Activated naive CD4-positive, alpha-beta T cell treated with anti-CD3 and anti-CD28 coated beads for 36 hours (primary cell): ENCODE measurements at regions of chr3 and their contacts with region 1.

Region 1: GRCh38 chr3:125437631-125438435 is 62.7 kb upstream of the ZNF148 start:
- DNase-seq: peak; percentile 70
- H3K4me3 Mint-ChIP-seq: no peak overlapping the region
- H3K27ac Mint-ChIP-seq: no peak overlapping the region
- H3K4me1 Mint-ChIP-seq: no peaks in the 10 kb centered on the region
- H3K27me3 Mint-ChIP-seq: no peaks in the 10 kb centered on the region

Region 2: DNA sequence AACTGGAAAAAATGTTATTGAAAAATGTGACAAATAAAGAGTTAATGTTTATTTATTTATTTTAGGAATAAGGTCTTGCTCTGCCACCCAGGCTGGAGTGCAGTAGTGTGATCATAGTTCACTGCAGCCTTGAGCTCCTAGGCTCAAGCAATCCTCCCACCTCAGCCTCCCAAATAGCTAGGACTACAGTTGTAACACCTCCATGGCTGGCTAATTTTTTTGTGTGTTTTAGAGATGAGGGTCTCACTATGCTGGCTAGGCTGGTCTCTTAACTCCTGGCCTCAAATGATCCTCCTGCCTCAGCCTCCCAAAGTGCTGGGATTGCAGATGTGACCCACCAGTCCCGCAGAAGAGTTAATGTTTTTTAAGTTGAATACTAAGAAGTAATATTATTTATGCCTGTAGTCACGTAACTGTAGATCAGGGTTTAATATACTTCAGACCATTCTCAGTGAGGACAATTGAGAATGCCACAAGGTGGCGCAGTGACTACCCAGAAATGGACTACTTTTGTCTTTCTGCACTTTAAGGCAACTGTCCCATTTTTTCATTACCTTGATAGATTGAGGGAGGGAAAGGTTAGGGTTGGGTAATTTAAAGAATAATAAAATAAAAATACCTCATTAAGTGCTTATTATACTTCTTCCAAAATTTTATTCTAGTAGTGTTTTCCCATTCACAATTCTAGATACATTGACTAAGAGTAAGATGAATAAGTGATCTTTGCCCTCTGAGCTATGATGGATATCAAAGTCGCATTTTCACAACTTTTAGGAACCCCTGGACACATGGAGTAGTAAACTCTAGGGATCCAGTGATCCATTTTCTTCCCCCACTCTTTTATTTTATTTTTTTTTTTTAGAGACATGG is 509.3 kb before region 1 on chr3:
- CTCF ChIA-PET with region 1: interaction called, 5 read pairs
- intact Hi-C with region 1: loop called (anchors 1 kb)
- DNase-seq: peak; percentile 82
- H3K4me3 Mint-ChIP-seq: no peak overlapping the region
- H3K27ac Mint-ChIP-seq: no peak overlapping the region
- H3K4me1 Mint-ChIP-seq: no peaks in the 10 kb centered on the region
- H3K27me3 Mint-ChIP-seq: peaks cover 3% of the 10 kb centered on the region

Region 3: GRCh38 chr3:124995460-124995994 is 442.3 kb before region 1 on chr3:
- CTCF ChIA-PET with region 1: interaction called, 11 read pairs
- intact Hi-C with region 1: loop called (anchors 1 kb)
- DNase-seq: peak; percentile 72
- H3K4me3 Mint-ChIP-seq: no peak overlapping the region
- H3K27ac Mint-ChIP-seq: peak overlapping the region; percentile 24
- H3K4me1 Mint-ChIP-seq: peaks cover 3% of the 10 kb centered on the region
- H3K27me3 Mint-ChIP-seq: no peaks in the 10 kb centered on the region

Region 4: GRCh38 chr3:125150525-125151441 is 287.1 kb before region 1 on chr3:
- CTCF ChIA-PET with region 1: interaction called, 3 read pairs
- intact Hi-C with region 1: loop called (anchors 1 kb)
- DNase-seq: peak; percentile 80
- H3K4me3 Mint-ChIP-seq: no peak overlapping the region
- H3K27ac Mint-ChIP-seq: no peak overlapping the region
- H3K4me1 Mint-ChIP-seq: peaks cover 13% of the 10 kb centered on the region
- H3K27me3 Mint-ChIP-seq: peaks cover 3% of the 10 kb centered on the region

Region 5: GRCh38 chr3:125212509-125213244 is 225.2 kb before region 1 on chr3 and contains the start of gene SLC12A8:
- CTCF ChIA-PET with region 1: no interaction called
- intact Hi-C with region 1: loop called (anchors 5 kb)
- DNase-seq: no peak
- H3K4me3 Mint-ChIP-seq: peak within 1 kb of the TSS; percentile 38
- H3K27ac Mint-ChIP-seq: no peak within 1 kb of the TSS
- H3K4me1 Mint-ChIP-seq: peaks cover 14% of the 10 kb centered on the region
- H3K27me3 Mint-ChIP-seq: peaks cover 41% of the 10 kb centered on the region
- total RNA-seq, gene SLC12A8: 1.1 TPM

Region 6: DNA sequence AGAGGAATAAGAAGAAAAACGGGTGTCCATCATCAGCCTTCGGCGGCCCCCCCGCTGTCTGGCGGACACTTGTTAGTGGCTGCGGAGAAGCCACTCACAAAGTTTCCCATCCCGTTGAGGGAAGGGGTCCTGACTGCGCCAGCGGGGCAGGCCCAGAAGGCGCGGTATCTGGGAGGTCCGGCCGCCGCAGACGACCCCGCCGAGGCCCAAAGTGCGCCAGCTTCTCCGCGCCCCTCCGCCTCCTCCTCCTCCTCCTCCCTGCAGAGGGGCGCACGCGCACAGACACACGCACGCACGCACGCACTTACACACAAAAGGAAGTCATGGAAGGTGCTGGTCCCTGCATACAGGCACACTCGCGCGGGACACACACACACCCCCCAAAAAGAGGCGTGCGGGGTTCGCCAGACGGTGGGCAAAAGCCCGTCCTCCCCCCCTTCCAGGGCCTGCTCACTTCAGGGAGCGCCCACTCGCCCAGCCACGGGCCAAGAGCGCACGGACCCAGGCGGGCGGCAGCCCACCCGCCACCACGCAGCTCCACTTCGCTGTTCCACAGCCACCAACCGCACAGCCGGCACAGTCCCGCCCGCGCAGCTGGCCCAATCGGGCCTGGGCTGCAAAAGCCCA is 80.7 kb before region 1 on chr3:
- CTCF ChIA-PET with region 1: no interaction called
- intact Hi-C with region 1: no loop called
- DNase-seq: peak; percentile 69
- H3K4me3 Mint-ChIP-seq: peak overlapping the region; percentile 71
- H3K27ac Mint-ChIP-seq: peak overlapping the region; percentile 78
- H3K4me1 Mint-ChIP-seq: peaks cover 54% of the 10 kb centered on the region
- H3K27me3 Mint-ChIP-seq: no peaks in the 10 kb centered on the region

Region 7: DNA sequence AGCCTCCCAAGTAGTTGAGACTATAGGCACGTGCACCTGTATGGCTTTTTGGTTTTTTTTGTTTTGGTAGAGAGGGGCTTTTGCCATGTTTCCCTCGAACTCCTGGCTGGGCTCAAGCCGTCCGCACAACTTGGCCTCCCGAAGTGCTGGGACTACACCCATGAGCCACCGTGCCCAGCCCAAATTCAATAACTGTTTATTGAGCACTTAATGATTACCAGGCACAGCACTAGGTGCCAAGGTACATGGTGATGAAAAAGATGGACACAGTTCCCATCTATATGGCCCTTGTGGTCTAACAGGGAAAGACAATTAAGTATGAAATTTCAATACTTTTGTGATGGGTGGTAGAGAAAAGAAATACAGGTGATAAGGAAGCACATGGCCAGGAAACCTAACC is 26.9 kb before region 1 on chr3:
- CTCF ChIA-PET with region 1: no interaction called
- intact Hi-C with region 1: no loop called
- DNase-seq: no peak
- H3K4me3 Mint-ChIP-seq: no peak overlapping the region
- H3K27ac Mint-ChIP-seq: no peak overlapping the region
- H3K4me1 Mint-ChIP-seq: no peaks in the 10 kb centered on the region
- H3K27me3 Mint-ChIP-seq: peaks cover 6% of the 10 kb centered on the region

Region 8: DNA sequence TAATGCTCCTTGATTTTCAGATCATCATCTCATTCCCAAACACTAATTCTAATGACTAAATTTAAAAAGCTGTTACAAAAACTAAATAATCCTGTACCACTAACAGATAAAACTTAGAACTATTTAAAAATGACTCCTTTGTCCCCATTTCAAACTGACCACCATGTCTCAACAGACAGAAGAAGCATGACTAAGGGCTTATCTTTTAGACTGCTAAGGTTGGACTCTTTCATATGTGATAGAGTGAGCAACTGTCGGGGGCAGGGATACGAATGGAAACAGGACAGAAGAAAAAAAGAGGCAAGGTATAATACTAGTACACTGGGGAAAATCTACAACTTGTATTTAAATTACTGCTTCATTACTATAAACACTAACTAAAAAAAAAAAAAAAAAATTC is 58.9 kb after region 1 on chr3:
- CTCF ChIA-PET with region 1: no interaction called
- intact Hi-C with region 1: no loop called
- DNase-seq: no peak
- H3K4me3 Mint-ChIP-seq: no peak overlapping the region
- H3K27ac Mint-ChIP-seq: no peak overlapping the region
- H3K4me1 Mint-ChIP-seq: no peaks in the 10 kb centered on the region
- H3K27me3 Mint-ChIP-seq: no peaks in the 10 kb centered on the region

Region 9: GRCh38 chr3:125990253-125990970 is 552.6 kb after region 1 on chr3:
- CTCF ChIA-PET with region 1: no interaction called
- intact Hi-C with region 1: no loop called
- DNase-seq: peak; percentile 71
- H3K4me3 Mint-ChIP-seq: peak overlapping the region; percentile 93
- H3K27ac Mint-ChIP-seq: peak overlapping the region; percentile 91
- H3K4me1 Mint-ChIP-seq: peaks cover 3% of the 10 kb centered on the region
- H3K27me3 Mint-ChIP-seq: peaks cover 9% of the 10 kb centered on the region